ENCODE measurements at regions of chr5 and their contacts with region 1.

Region 1: DNA sequence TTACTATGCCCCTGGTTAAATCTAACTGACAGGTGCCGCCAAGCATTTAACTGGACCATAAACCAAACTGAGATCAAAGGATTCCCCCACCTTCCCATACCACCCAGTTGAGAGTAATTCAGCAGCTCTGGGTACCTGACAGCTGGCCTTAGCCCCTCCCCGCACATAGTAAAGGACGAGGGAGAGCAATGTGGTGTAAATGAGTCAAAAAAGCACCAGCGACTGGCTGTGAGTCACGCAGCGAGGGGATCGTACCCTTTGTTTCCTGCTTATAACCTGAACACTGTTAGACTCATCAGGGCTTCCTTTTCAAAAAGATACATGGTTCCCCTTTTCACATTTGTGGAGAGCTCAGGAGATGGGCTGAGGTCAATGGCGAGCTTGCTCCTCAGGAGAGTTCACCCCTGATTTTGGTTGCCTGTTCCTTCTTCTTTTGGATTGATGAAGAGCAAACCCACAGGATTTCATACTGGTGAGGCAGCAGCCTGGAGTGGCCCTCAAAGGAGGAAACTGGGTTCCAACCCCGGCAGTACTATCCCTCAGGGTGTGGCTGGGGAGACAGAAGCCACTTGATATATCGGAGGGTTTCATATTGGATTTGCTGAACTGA is 71.5 kb downstream of the ANKRD33B start:
- DNase-seq: peak; percentile 93
- H3K4me3 Mint-ChIP-seq: peak overlapping the region; percentile 13
- H3K27ac Mint-ChIP-seq: peak overlapping the region; percentile 79
- H3K4me1 Mint-ChIP-seq: peaks cover 56% of the 10 kb centered on the region
- H3K27me3 Mint-ChIP-seq: no peaks in the 10 kb centered on the region

Region 2: DNA sequence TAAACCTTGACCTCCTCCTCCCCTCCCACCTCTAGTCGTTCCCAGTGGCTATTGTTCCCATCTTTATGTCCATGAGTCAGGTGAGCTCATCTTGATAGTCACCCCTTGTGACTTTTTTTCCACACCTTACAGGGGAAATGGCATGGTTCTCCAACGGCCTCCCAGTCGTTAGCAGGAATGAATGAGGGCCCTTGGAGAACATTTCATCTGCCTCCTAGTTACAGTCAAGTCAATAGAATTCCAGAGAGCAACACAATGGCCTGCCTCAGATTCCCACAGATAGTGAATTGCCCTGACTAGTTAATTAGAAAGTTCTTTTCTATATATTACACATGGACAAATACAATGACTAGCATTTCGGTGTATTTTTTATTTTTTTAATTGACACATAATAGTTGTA is 648.3 kb before region 1 on chr5:
- CTCF ChIA-PET with region 1: no interaction called
- intact Hi-C with region 1: no loop called
- DNase-seq: no peak
- H3K4me3 Mint-ChIP-seq: no peak overlapping the region
- H3K27ac Mint-ChIP-seq: no peak overlapping the region
- H3K4me1 Mint-ChIP-seq: no peaks in the 10 kb centered on the region
- H3K27me3 Mint-ChIP-seq: peaks cover 4% of the 10 kb centered on the region

Region 3: GRCh38 chr5:10249948-10250803 is 385.2 kb before region 1 on chr5 and contains the start of gene CCT5:
- CTCF ChIA-PET with region 1: no interaction called
- intact Hi-C with region 1: loop called (anchors 10 kb)
- DNase-seq: peak; percentile 93
- H3K4me3 Mint-ChIP-seq: peak within 1 kb of the TSS; percentile 86
- H3K27ac Mint-ChIP-seq: peak within 1 kb of the TSS; percentile 99
- H3K4me1 Mint-ChIP-seq: peaks cover 47% of the 10 kb centered on the region
- H3K27me3 Mint-ChIP-seq: no peaks in the 10 kb centered on the region
- total RNA-seq, gene CCT5: 414 to 419 TPM

Region 4: DNA sequence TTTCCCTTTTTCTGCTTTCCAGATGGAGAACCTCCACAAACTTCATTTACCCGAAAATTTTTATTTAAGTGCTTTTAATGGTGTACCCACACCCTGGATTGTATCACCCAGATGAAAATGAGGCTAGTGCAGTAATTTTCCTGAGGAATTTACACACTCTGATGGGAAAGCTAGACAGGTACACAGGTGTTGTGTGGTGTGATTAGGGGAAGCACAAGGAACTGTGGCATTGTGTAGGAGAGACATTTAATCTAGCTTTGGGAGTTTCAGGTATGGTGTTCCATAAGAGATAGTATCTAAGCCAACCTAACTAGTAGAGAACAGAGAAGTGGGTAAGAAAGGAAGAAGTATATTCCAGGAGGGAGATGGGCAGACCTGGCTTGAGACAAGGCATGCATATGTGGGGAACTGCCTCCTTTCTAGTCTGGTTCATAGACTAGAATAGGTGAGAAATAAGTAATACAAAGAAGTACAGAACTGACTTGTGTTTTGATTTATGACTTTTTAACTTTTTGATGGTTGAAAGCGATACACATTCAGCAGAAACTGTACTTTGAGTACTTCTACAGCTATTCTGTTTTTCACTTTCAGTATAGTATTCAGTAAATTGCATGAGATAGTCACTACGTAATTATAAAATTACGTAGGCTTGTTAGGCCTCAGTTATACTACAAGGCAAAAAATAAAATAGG is 216.6 kb before region 1 on chr5:
- CTCF ChIA-PET with region 1: no interaction called
- intact Hi-C with region 1: loop called (anchors 1 kb)
- DNase-seq: peak; percentile 21
- H3K4me3 Mint-ChIP-seq: no peak overlapping the region
- H3K27ac Mint-ChIP-seq: no peak overlapping the region
- H3K4me1 Mint-ChIP-seq: peaks cover 52% of the 10 kb centered on the region
- H3K27me3 Mint-ChIP-seq: no peaks in the 10 kb centered on the region

Region 5: DNA sequence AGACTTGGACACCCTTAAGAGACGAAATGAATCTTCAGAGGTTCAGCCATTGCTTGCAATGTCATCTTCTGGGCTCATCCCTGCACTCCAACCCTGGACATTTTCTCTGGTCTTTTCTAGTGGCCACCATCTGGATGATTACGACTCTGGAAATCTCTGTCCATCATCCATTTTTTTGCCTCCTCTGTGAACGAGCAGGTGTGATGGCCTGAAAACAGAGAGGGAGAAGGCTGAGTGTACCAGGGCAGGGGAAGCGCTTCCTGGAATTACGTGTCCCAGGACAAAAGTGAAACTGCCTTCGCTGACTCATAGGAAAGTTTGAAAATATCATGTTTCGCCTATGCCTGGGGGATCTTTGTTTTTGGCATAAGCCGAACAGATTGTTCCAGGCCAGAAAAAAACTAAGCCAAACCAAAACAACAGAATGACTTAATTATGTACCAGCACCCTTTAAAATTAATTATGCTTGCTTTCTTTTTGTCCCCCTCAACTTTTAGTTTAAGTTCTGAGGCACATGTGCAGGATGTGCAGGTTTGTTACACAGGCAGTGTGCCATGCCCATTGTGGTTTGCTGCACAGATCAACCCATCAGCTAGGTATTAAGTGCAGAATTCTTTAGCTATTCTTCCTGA is 39.6 kb before region 1 on chr5:
- CTCF ChIA-PET with region 1: interaction called, 4 read pairs
- intact Hi-C with region 1: loop called (anchors 1 kb)
- DNase-seq: peak; percentile 68
- H3K4me3 Mint-ChIP-seq: no peak overlapping the region
- H3K27ac Mint-ChIP-seq: no peak overlapping the region
- H3K4me1 Mint-ChIP-seq: peaks cover 35% of the 10 kb centered on the region
- H3K27me3 Mint-ChIP-seq: peaks cover 27% of the 10 kb centered on the region

Region 6: DNA sequence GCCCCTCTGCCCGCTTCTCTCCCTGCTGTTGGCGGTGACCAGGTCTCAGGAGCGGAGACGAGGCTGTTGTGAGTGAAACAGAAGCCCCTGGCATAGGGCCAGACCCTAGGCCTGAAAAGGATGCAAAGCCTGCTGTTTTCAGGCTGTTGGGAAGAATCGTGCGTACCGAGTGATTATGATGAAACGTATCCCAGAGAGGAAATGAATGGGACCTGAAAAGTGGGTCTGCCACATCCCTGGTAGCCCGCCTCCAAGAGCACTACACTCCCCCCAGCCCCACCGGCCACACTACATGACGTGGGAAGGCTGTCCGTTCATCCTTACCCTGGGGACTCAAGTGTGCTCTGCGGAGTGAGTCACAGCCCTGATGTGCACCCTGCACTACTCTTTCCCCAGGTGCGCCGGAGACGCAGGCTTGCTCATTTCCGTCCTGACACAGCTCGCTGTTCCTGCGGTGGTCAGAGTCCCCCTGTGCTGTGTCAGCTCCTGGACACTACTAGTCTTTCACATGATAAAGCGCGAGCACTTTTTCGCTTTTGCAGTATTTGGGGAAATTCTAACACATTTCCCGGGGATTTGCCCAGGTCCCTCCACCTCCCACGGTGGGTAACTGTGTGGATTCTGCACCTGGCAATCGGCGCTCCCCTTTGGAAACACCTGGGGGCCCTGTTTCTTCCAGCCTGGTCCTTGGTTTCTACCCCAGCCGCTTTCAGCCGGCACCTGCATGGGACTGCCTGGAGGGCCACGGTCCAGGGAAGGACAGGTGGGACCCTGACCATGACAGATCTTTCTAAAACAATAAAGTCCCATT is 20.0 kb after region 1 on chr5:
- CTCF ChIA-PET with region 1: no interaction called
- intact Hi-C with region 1: no loop called
- DNase-seq: no peak
- H3K4me3 Mint-ChIP-seq: no peak overlapping the region
- H3K27ac Mint-ChIP-seq: no peak overlapping the region
- H3K4me1 Mint-ChIP-seq: no peaks in the 10 kb centered on the region
- H3K27me3 Mint-ChIP-seq: no peaks in the 10 kb centered on the region

Region 7: DNA sequence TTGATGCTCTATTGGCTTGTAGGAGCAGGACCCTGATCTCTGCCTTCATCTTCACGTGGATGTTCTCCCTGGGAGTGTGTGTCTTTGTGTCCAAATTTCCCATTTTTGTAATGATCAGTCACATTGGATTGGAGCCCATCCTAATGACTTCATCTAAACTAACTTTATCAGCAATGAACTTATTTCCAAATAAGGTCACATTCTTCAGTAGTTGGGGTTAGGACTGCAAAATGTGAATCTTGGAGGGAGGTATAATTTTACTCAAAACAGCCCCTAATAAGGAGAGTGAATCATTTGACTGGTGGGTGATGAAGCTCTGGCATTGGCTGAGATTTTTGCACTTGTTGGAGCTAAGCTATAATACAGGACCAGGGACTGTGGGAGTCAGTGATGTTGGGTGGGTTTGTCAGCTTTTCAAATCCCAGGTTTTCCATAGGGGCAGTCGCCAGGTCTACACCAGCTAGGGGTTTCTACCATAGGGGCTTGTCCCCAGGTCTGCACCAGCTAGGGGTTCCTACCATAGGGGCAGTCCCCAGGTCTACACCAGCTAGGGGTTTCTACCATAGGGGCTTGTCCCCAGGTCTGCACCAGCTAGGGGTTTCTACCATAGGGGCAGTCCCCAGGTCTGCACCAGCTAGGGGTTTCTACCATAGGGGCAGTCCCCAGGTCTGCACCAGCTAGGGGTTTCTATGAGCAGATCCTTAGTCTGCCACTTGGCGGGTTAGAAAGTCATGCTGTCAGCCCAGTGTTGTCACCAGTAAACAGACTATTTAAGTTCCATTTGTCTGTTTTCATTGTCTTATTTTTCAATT is 508.3 kb after region 1 on chr5:
- CTCF ChIA-PET with region 1: no interaction called
- intact Hi-C with region 1: loop called (anchors 1 kb)
- DNase-seq: peak; percentile 91
- H3K4me3 Mint-ChIP-seq: no peak overlapping the region
- H3K27ac Mint-ChIP-seq: no peak overlapping the region
- H3K4me1 Mint-ChIP-seq: peaks cover 9% of the 10 kb centered on the region
- H3K27me3 Mint-ChIP-seq: peaks cover 21% of the 10 kb centered on the region